Heart left ventricle (tissue), 16 donors: ENCODE measurements at regions of chr6 and their contacts with region 1.

Region 1: DNA sequence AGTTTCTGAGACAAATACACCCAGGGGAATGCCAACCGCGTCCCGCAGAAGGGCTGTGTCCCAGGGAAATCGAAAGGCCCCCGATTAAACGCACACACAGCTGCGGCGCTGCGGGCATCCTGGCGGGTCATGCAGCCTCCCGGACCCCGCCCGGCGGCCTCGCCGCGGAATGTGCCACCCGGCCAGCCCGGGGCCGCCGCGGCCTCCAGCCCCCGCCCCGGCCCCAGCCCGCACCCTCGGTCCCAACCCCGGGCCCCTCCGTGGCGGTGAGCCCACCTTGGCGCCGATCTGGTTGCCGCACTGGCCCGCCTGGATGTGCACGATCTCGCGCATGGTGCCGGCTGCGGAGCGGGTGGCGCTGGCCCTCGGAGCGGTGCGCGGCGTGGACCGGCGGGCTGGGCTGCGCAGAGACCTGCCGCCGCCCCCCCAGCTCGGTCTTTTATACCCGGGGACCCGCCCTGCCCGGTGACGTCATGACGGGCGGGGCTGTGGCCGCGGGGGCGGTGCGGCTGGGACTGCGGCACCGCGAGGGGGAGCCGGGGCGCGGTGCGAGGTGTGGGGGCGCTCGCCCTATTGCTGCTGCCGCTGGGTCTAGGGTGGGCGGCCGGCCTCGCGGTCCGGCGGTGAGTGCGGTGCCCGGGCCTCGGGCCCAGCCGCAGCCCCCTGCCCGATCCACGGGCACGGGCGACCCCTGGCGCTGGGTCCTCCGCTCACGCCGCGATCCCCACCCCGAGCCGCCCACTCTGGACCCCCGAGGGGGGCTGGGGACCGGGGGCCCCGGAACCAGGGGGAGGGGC is at the start of gene TUBB2A:
- DNase-seq: peak; percentile 85 to 95 (median 90)
- ATAC-seq: peak; percentile 64 to 93 (median 90)
- H3K4me3 ChIP-seq: peak within 1 kb of the TSS; percentile 74 to 99 (median 86)
- H3K27ac ChIP-seq: peak within 1 kb of the TSS; percentile 93 to 99 (median 98)
- H3K4me1 ChIP-seq: peaks cover 0 to 24% (median 2%) of the 10 kb centered on the region in 12 donors
- H3K27me3 ChIP-seq: no peaks in the 10 kb centered on the region
- CTCF ChIP-seq: peak in 11 of 12 donors; percentile 50 to 85 (median 62)
- POLR2A ChIP-seq: peak; percentile 91 to 99
- total RNA-seq, gene TUBB2A: 12.7 to 61.7 (median 26.0) TPM

Region 2: GRCh38 chr6:3176562-3177355 is 19.4 kb after region 1 on chr6:
- intact Hi-C with region 1: loop called in 1 of 10 experiments (anchors 2 kb)
- DNase-seq: peak in 1 of 5 donors; percentile 74
- ATAC-seq: peak in 3 of 4 donors; percentile 77 to 90 (median 88)
- H3K4me3 ChIP-seq: no peak overlapping the region
- H3K27ac ChIP-seq: no peak overlapping the region
- H3K4me1 ChIP-seq: no peaks in the 10 kb centered on the region
- H3K27me3 ChIP-seq: no peaks in the 10 kb centered on the region
- CTCF ChIP-seq: no peak
- POLR2A ChIP-seq: no peak

Region 3: GRCh38 chr6:3231247-3232016 is 74.1 kb after region 1 on chr6:
- intact Hi-C with region 1: loop called in 4 of 10 experiments (anchors 2 to 5 kb)
- DNase-seq: peak in 4 of 5 donors; percentile 63 to 79 (median 76)
- ATAC-seq: peak; percentile 77 to 87 (median 81)
- H3K4me3 ChIP-seq: peak overlapping the region; percentile 16 to 78 (median 64)
- H3K27ac ChIP-seq: peak overlapping the region; percentile 42 to 81 (median 69)
- H3K4me1 ChIP-seq: peaks cover 2 to 55% (median 38%) of the 10 kb centered on the region in 12 donors
- H3K27me3 ChIP-seq: peaks cover 22 to 87% (median 61%) of the 10 kb centered on the region in 9 donors
- CTCF ChIP-seq: no peak
- POLR2A ChIP-seq: no peak

Region 4: DNA sequence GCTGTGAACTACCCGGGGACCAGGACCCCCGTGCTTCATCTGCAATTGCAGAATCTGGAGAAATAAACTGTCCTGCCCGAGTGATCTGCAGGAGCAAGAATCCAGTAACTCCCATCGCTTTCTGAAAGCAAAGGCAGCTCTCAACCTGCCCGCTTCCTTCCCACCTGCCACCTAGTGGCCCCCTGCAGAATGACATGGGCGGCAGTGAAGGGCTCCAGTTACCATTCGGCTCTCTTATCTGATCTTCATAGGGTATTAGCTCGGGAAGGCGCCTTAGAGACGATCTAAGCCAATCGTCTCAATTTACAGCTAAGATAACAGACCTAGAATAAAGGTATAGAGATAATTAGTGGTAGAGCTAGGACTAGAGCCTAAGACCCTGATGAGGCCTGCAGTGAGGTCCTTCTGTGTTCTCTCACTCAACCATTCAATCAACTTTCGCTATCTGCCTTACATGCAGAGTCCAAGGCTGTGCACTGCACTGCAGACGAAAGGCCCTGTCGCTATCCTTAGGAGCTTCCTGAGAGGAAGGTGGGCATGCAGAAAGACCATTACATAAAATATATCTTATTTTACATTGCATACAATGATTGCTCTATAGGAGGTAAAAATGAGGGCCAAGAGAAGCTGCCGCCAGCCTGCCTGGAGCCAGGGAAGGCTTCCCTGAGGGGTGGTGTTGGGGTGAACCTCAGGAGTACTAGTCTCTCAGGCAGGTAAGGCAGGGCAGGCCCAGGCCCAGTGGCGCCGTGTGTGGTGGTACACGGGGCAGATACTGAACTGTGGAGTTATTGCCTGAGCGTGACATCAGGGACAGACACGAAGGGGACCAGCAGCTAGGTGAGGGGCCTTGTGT is 94.4 kb after region 1 on chr6:
- intact Hi-C with region 1: loop called in 8 of 10 experiments (anchors 1 to 10 kb)
- DNase-seq: peak; percentile 71 to 90 (median 81)
- ATAC-seq: peak; percentile 44 to 86 (median 80)
- H3K4me3 ChIP-seq: peak overlapping the region in 1 of 12 donors; percentile 5
- H3K27ac ChIP-seq: peak overlapping the region in 3 of 12 donors; percentile 20 to 70 (median 39)
- H3K4me1 ChIP-seq: peaks cover 0 to 32% (median 11%) of the 10 kb centered on the region in 12 donors
- H3K27me3 ChIP-seq: peaks cover 0 to 20% (median 0%) of the 10 kb centered on the region in 9 donors
- CTCF ChIP-seq: peak; percentile 93 to 99 (median 97)
- POLR2A ChIP-seq: peak in 1 of 2 donors; percentile 14